Dorsolateral prefrontal cortex (tissue), 120 donors: ENCODE measurements at regions of chr14 and their contacts with region 1.

Region 1: DNA sequence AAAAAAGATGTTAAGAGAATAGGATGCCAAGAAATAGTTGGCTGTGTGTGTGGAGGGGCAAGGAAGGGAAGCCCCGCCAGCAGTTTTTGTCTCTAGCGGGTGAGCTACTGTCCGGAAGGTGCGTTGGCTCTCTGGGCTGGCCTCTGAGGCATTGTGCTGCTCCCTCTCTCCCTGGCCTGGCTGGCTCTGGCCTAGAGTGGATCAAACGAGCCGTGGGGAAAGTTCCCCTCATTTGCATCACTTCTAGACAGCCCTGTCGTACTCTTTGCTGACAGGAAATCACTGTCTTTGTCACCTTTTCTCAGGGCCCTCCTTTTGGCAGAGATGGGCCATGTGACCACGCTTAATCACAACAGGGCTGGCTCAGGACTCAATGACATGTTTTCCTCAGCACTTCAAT is 236.1 kb upstream of the NPAS3 start:
- DNase-seq: peak in 7 of 10 donors; percentile 32 to 67 (median 55)
- H3K4me3 ChIP-seq: peak overlapping the region in 18 of 59 donors; percentile 3 to 35 (median 22)
- H3K27ac ChIP-seq: peak overlapping the region; percentile 42 to 91 (median 83)
- H3K27me3 ChIP-seq: no peaks in the 10 kb centered on the region
- CTCF ChIP-seq: no peak

Region 2: DNA sequence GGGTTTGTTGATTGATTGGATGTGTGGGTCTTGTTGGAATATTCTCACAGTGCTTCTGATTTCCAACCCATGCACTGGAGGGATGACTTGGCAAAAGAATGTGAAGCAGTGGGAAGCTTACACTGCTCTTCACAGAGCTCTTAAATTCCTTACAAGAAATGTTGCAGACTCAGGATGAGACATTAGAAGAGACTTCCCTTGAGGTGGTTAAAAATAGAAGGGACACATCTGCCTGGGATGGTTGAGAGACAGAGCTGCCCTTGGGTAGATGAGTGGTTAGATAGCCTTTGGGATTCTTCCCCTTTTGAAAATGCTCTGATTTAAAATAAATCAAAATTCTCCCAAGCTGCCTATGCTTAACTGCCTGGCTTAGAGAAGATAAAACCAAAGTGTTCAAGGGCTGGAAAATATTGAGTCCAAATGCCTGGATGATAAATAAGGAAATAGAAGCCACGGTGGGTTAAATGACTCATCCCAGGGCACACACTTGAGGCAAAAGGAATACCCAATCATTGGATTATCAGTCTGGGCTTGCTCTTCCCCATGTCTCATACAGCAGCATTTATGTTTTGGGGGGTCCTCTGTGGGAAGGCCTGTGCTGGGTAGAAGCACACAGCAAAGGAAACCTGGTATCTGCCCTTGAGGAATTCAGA is 109.1 kb before region 1 on chr14:
- intact Hi-C with region 1: loop called in 1 of 2 experiments (anchors 5 kb)
- DNase-seq: no peak
- H3K4me3 ChIP-seq: no peak overlapping the region
- H3K27ac ChIP-seq: peak overlapping the region in 8 of 59 donors; percentile 1 to 48 (median 20)
- H3K27me3 ChIP-seq: no peaks in the 10 kb centered on the region
- CTCF ChIP-seq: no peak

Region 3: GRCh38 chr14:32657081-32657480 is 45.5 kb before region 1 on chr14:
- intact Hi-C with region 1: loop called in 1 of 2 experiments (anchors 10 kb)
- DNase-seq: peak in 5 of 10 donors; percentile 4 to 49 (median 32)
- H3K4me3 ChIP-seq: peak overlapping the region in 6 of 59 donors; percentile 0 to 30 (median 14)
- H3K27ac ChIP-seq: peak overlapping the region in 54 of 59 donors; percentile 1 to 77 (median 58)
- H3K27me3 ChIP-seq: no peaks in the 10 kb centered on the region
- CTCF ChIP-seq: peak in 5 of 56 donors; percentile 12 to 25 (median 16)